Panc1 (cell line): ENCODE measurements at regions of chr7 and their contacts with region 1.

Region 1: GRCh38 chr7:127514499-127514898 is 70.9 kb downstream of the GCC1 start:
- DNase-seq: peak; percentile 41
- ATAC-seq: peak; percentile 92
- H3K4me3 ChIP-seq: no peak overlapping the region
- H3K27ac ChIP-seq: no peak overlapping the region
- H3K4me1 ChIP-seq: no peaks in the 10 kb centered on the region
- H3K27me3 ChIP-seq: peaks cover 15% of the 10 kb centered on the region
- CTCF ChIP-seq: peak; percentile 54; the same call in 1 of the 2 replicates

Region 2: GRCh38 chr7:127107601-127108007 is 406.9 kb before region 1 on chr7:
- CTCF ChIA-PET with region 1: no interaction called
- POLR2A ChIA-PET with region 1: no interaction called
- in situ Hi-C with region 1: no loop called
- intact Hi-C with region 1: no loop called
- DNase-seq: peak; percentile 22
- ATAC-seq: 0 out of 2 replicates have a peak, but pooled peaks have one; percentile 70
- H3K4me3 ChIP-seq: no peak overlapping the region
- H3K27ac ChIP-seq: no peak overlapping the region
- H3K4me1 ChIP-seq: no peaks in the 10 kb centered on the region
- H3K27me3 ChIP-seq: no peaks in the 10 kb centered on the region
- CTCF ChIP-seq: peak; percentile 52

Region 3: DNA sequence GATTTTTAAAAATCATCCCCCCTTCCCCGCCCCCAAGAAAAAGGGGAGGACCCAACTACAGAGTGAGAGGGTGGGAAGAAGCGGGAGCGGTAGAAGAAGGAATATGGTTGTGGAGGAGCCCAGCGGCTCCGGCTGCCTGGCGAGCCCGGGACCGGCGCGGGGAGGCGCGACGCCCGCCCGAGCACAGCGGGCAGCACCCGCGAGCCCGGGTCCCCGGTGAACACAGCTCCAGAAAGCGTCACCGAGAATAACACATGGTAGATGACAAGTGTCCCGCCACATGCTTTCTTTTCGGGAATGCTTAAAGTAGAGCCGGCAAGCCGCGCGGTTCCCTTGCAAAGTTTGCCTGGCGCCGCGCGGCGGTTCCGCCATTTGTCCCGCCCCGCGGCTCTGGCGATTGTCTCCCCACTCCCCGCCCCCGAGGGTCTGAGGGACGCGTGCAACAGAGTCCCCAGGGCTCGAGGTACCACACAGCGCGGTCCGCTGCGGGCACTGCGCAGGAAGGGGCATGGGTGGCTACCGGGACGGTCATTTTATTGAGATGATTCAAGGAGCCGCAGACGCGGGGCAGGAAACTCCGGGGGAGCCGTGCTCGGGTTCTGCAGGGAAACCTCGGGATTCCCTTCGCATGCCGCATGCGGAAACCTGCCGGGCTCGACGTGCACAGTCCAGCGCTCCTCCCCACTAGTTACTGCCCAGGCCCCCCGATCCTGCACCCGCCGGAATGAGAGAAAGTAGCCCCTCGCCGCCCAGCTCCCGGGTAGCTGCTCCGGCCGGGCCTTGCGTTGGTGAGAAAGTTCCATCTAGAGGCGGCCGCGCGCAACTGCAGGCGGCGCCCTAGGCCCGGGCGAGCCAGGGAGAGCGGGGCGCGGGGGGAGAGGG is 261.0 kb before region 1 on chr7:
- CTCF ChIA-PET with region 1: no interaction called
- POLR2A ChIA-PET with region 1: no interaction called
- in situ Hi-C with region 1: no loop called
- intact Hi-C with region 1: loop called (anchors 10 kb)
- DNase-seq: peak; percentile 15
- ATAC-seq: peak; percentile 90
- H3K4me3 ChIP-seq: peak overlapping the region; percentile 58 to 83
- H3K27ac ChIP-seq: no peak overlapping the region
- H3K4me1 ChIP-seq: peaks cover 12% of the 10 kb centered on the region
- H3K27me3 ChIP-seq: peaks cover 38% of the 10 kb centered on the region
- CTCF ChIP-seq: peak; percentile 98

Region 4: GRCh38 chr7:127347567-127348246 is 166.8 kb before region 1 on chr7:
- CTCF ChIA-PET with region 1: interaction called, 4 read pairs
- POLR2A ChIA-PET with region 1: no interaction called
- in situ Hi-C with region 1: no loop called
- intact Hi-C with region 1: loop called (anchors 10 kb)
- DNase-seq: peak; percentile 20
- ATAC-seq: peak; percentile 100
- H3K4me3 ChIP-seq: peak overlapping the region; percentile 42 to 50
- H3K27ac ChIP-seq: no peak overlapping the region
- H3K4me1 ChIP-seq: no peaks in the 10 kb centered on the region; the same call in 1 of the 2 replicates
- H3K27me3 ChIP-seq: no peaks in the 10 kb centered on the region; the same call in 1 of the 2 replicates
- CTCF ChIP-seq: peak; percentile 95

Region 5: DNA sequence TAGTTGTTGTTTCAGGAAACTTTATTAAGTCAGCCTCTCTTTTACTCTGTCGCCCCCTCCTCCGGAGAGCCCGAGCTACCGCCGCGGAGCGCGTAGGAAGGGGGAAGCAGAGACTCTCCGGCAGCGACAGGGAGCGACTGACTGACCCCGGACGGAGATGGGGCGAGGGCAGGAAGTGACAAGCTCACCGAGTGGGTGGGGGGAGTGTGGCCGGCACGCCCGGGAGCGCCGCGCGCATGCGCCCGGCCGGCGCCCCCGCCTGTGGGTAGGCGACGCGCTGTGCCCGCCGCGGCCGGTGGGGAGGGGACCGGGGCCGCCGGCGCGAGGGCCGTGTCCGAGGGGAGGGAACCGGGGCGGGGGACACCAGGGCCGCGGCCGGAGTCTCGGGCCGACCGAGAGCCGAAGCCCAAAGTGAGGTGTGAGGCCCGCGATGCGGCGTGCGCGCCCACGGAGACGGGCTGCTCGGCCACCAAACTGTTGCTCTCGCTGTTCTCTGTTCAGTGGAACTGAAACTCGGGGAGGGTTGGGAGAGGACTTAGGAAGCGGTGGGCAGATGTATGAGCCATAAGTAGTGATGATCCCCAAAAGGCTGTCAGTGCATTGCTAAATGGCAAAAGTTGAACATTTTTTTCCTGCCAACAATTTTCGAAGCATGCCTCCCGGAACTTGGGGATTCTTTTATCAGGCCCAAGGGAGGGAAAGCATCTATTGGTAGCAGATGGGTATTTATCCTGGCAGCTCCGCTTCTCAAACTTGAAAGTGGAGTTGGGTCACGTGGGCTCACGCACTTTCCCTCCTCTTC is 121.7 kb before region 1 on chr7 and contains the start of gene ZNF800:
- CTCF ChIA-PET with region 1: no interaction called
- POLR2A ChIA-PET with region 1: no interaction called
- in situ Hi-C with region 1: no loop called
- intact Hi-C with region 1: no loop called
- DNase-seq: peak; percentile 47
- ATAC-seq: peak; percentile 98
- H3K4me3 ChIP-seq: peak within 1 kb of the TSS; percentile 86 to 94
- H3K27ac ChIP-seq: peak within 1 kb of the TSS; percentile 94
- H3K4me1 ChIP-seq: peaks cover 16% of the 10 kb centered on the region
- H3K27me3 ChIP-seq: no peaks in the 10 kb centered on the region
- CTCF ChIP-seq: no peak
- total RNA-seq, gene ZNF800: 26.0 TPM